Lower leg skin (tissue), 4 donors: ENCODE measurements at regions of chr7 and their contacts with region 1.

Region 1: GRCh38 chr7:123580406-123581161 is 21.0 kb upstream of the ASB15 start:
- DNase-seq: no peak
- H3K4me3 ChIP-seq: no peak overlapping the region
- CTCF ChIP-seq: no peak
- POLR2A ChIP-seq: no peak

Region 2: GRCh38 chr7:123502201-123502600 is 78.4 kb before region 1 on chr7:
- intact Hi-C with region 1: loop called (anchors 10 kb)
- DNase-seq: no peak
- H3K4me3 ChIP-seq: no peak overlapping the region
- CTCF ChIP-seq: no peak
- POLR2A ChIP-seq: no peak